ENCODE measurements at regions of chr2 and their contacts with region 1.

Region 1: GRCh38 chr2:181077128-181077709 is 96.8 kb downstream of the UBE2E3 start:
- DNase-seq: no peak
- H3K4me3 Mint-ChIP-seq: no peak overlapping the region
- H3K27ac Mint-ChIP-seq: no peak overlapping the region
- H3K4me1 Mint-ChIP-seq: peaks cover 12% of the 10 kb centered on the region
- H3K27me3 Mint-ChIP-seq: no peaks in the 10 kb centered on the region

Region 2: DNA sequence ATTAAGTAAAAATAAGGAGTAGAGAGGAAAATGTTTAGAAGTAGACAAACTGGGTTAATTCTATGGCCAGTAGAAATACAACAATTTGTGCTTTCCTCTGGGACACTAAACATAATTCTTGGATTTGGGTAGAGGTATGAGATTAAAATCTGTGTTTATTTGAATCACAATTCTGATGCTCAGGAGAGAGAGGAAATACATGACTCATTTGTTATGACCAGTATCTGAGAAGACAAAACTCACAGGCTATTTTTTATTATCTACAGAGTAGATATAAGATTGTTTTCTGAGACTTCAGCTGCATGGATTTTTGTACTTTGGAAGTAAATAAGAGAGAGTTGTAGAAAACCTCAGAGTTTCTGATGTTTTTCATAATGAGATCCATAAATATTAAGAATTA is 754.4 kb before region 1 on chr2:
- intact Hi-C with region 1: no loop called
- DNase-seq: no peak
- H3K4me3 Mint-ChIP-seq: no peak overlapping the region
- H3K27ac Mint-ChIP-seq: no peak overlapping the region
- H3K4me1 Mint-ChIP-seq: no peaks in the 10 kb centered on the region
- H3K27me3 Mint-ChIP-seq: no peaks in the 10 kb centered on the region

Region 3: GRCh38 chr2:181026614-181027013 is 50.6 kb before region 1 on chr2:
- intact Hi-C with region 1: no loop called
- DNase-seq: no peak
- H3K4me3 Mint-ChIP-seq: no peak overlapping the region
- H3K27ac Mint-ChIP-seq: no peak overlapping the region
- H3K4me1 Mint-ChIP-seq: no peaks in the 10 kb centered on the region
- H3K27me3 Mint-ChIP-seq: peaks cover 3% of the 10 kb centered on the region

Region 4: DNA sequence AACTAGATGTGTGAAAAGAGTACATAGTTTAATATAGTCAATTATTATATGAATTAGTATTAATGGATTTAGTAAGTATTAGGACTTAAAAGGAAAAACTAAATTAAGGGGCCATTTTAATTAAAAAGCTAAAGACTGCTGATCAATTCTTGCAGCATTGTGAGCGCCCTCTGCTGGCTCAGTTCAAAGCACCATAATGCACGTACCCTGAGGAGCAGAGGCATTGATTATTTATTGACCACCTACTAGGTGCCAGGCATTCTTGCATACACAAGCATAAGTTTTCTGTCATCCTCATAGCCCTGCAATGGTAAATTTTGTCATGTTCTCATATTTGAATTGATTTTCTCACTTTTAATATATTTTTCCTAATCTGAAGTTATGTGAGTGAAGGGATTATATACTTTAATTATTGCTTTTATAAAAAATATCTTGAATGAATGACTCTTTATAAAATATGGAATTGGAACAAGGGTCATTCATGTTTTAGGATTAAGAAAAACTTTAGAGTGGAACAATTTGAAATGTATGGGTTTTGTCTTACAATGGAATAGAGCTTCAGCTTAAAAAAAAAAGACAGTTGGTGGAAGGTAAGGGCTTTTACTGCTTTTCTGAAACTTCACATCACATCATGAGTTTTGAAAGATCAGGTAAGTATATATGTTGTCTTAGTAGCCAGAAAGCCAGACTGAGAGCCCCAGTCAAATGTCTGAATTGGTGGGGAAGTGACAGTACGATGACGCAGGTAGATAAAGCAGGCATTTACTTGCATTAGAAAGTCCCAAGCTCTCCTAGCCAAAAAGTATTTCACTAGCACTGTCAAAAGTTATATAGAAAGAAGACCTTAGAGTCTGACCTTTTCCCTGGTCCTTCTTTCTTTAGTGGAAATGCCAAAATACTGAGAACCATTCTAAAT is 389.7 kb after region 1 on chr2:
- intact Hi-C with region 1: loop called (anchors 1 kb)
- DNase-seq: peak; percentile 56
- H3K4me3 Mint-ChIP-seq: no peak overlapping the region
- H3K27ac Mint-ChIP-seq: peak overlapping the region; percentile 30
- H3K4me1 Mint-ChIP-seq: peaks cover 87% of the 10 kb centered on the region
- H3K27me3 Mint-ChIP-seq: no peaks in the 10 kb centered on the region

Region 5: GRCh38 chr2:181715033-181715630 is 637.9 kb after region 1 on chr2:
- intact Hi-C with region 1: loop called (anchors 1 kb)
- DNase-seq: peak; percentile 45
- H3K4me3 Mint-ChIP-seq: no peak overlapping the region
- H3K27ac Mint-ChIP-seq: no peak overlapping the region
- H3K4me1 Mint-ChIP-seq: no peaks in the 10 kb centered on the region
- H3K27me3 Mint-ChIP-seq: peaks cover 5% of the 10 kb centered on the region

Region 6: DNA sequence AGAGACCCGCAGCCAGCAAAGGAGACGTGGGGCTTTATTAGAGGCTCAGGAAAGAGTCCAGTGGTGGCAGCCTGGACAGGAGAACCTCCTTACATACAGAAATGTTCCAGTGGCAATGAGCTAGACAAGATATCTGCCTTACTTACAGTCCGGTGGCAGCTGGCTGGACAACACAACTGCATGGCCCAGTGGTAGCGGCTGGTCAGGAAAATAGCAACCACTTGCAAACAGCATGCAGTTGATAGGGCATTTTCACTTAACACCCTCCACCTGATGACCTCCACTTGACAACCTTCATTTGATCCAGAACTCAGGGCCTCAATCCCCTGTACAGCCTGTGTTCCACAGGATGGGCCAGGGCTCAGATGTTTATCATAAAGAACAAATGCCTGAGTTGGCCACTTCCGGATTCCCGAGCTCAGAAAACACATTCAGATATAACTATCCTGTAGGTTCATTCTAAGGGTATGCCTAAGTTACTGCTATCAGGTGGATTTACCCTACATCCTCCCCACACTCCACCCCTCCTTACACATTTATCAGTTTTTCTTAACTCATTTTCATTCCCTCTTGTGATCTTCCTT is 751.0 kb after region 1 on chr2:
- intact Hi-C with region 1: no loop called
- DNase-seq: no peak
- H3K4me3 Mint-ChIP-seq: no peak overlapping the region
- H3K27ac Mint-ChIP-seq: no peak overlapping the region
- H3K4me1 Mint-ChIP-seq: no peaks in the 10 kb centered on the region
- H3K27me3 Mint-ChIP-seq: peaks cover 11% of the 10 kb centered on the region

Region 7: DNA sequence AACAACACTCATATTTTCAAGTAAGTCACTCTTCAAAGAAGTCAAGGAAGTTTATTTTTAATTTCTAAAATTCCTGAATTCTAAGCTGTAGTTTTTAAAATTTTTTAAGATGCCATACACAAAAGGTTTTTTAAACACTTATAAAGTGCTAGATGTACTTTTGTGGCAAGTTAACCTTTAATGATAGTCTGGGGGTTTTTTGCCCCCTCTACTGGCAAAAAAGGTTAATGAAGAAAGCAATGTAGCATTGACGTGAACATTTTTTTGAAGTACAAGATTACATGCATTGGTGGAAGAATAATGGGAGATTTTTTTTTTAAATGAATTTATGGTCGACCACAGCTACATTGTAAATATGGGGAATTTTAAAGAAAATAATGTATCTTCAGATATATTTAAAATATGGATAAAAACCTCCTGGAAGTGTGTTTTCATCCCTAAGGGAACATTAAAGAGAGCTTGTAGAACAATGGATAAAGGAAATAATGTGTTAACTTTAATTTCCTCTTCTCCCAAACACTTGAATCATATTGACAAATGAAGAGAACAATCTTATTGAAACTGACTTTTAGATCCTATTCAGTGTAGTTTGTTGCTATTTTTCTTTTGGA is 826.9 kb after region 1 on chr2:
- intact Hi-C with region 1: loop called (anchors 1 kb)
- DNase-seq: no peak
- H3K4me3 Mint-ChIP-seq: no peak overlapping the region
- H3K27ac Mint-ChIP-seq: no peak overlapping the region
- H3K4me1 Mint-ChIP-seq: peaks cover 21% of the 10 kb centered on the region
- H3K27me3 Mint-ChIP-seq: no peaks in the 10 kb centered on the region

Region 8: GRCh38 chr2:181953881-181954537 is 876.8 kb after region 1 on chr2:
- intact Hi-C with region 1: loop called (anchors 1 kb)
- DNase-seq: peak; percentile 38
- H3K4me3 Mint-ChIP-seq: peak overlapping the region; percentile 47
- H3K27ac Mint-ChIP-seq: no peak overlapping the region
- H3K4me1 Mint-ChIP-seq: peaks cover 21% of the 10 kb centered on the region
- H3K27me3 Mint-ChIP-seq: peaks cover 24% of the 10 kb centered on the region

Region 9: DNA sequence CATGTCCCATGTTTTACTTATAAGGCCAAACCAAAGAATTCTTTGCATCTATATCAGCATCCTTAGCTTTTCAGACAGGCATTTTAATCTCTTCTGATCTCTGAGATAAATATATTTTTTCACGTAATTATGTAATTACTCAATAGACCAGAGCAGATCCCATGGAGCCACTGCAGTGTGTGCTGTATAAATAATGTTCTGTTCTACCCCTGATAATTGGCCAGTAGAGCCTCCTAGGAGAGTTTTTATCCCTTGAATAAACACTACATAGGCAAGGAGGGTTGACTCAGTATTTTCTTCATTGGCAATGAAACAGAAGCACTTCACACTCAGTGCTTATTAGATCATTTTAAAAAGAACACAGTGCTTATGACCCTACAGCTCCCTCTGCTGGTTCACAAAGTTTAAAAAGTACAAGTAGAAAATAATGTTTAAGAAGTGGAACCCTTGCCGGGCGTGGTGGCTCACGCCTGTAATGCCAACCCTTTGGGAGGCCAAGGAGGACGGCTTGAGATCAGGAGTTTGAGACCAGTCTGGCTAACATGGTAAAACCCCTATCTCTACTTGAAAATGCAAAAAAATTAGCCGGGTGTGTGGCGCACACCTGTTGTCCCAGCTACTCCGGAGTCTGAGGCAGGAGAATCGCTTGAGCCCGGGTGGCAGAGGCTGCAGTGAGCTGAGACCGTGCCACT is 1000.4 kb after region 1 on chr2:
- intact Hi-C with region 1: loop called (anchors 2 kb)
- DNase-seq: no peak
- H3K4me3 Mint-ChIP-seq: no peak overlapping the region
- H3K27ac Mint-ChIP-seq: no peak overlapping the region
- H3K4me1 Mint-ChIP-seq: no peaks in the 10 kb centered on the region
- H3K27me3 Mint-ChIP-seq: peaks cover 4% of the 10 kb centered on the region